ENCODE measurements at regions of chr4 and their contacts with region 1.

Region 1: DNA sequence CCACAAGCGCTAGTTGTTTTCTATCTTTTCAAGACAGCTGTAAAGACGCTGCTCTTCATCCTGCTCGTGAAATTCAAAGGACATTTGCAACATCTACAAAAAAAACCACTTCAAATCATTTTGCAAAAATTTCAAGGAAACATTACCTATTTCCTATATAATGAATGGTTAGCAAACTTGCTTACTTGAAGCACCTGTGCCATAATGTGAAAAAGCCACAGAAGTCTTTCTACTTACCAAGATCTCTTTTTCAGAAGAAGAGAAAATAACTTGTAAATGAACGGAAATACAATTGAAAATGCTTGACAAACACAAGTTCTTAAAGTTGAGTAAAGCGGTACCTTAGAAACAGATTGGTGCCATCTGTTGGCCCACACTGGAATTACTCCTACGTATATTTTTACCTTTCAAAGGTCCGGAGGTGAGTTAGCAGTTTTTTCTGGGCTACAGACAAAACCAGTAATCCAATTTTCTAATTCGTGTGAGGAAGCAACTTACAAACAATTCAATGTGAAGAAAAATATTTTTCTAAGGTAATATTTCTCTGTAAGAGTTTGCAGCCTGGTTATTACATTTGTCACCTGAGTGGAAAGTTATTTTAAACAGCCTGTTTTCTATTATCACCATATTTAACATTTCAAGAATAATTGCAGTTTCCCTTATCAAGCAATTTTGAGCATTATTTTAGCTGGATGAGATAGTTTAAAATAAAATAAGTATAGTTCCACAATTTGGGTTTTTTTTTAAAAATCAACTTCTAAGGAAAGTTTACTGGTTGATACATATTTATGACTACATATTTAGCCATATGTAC is at the start of gene TLR6:
- DNase-seq: peak; percentile 61 to 91 (median 77)
- H3K4me3 ChIP-seq: peak within 1 kb of the TSS; percentile 49 to 93 (median 83)
- H3K4me3 Mint-ChIP-seq: peak within 1 kb of the TSS; percentile 72 to 91
- H3K27ac ChIP-seq: peak within 1 kb of the TSS; percentile 97 to 99
- H3K27ac Mint-ChIP-seq: peak within 1 kb of the TSS; percentile 97 to 100 (median 100)
- H3K4me1 ChIP-seq: peaks cover 39 to 63% of the 10 kb centered on the region in 2 donors
- H3K4me1 Mint-ChIP-seq: peaks cover 48% of the 10 kb centered on the region
- H3K27me3 ChIP-seq: no peaks in the 10 kb centered on the region
- H3K27me3 Mint-ChIP-seq: peaks cover 0 to 5% (median 0%) of the 10 kb centered on the region in 3 donors
- CTCF ChIP-seq: peak; percentile 98
- polyA plus RNA-seq, gene TLR6: 7.7 to 12.7 (median 11.5) TPM

Region 2: GRCh38 chr4:38078590-38079421 is 777.9 kb before region 1 on chr4:
- intact Hi-C with region 1: loop called (anchors 5 to 10 kb)
- DNase-seq: peak; percentile 55 to 87 (median 82)
- H3K4me3 ChIP-seq: peak overlapping the region in 2 of 3 experiments; percentile 17 to 56
- H3K4me3 Mint-ChIP-seq: peak overlapping the region; percentile 60 to 65
- H3K27ac ChIP-seq: peak overlapping the region; percentile 98 to 99
- H3K27ac Mint-ChIP-seq: peak overlapping the region; percentile 94 to 99 (median 98)
- H3K4me1 ChIP-seq: peaks cover 96 to 99% of the 10 kb centered on the region in 2 donors
- H3K4me1 Mint-ChIP-seq: peaks cover 87% of the 10 kb centered on the region
- H3K27me3 ChIP-seq: no peaks in the 10 kb centered on the region
- H3K27me3 Mint-ChIP-seq: peaks cover 0 to 2% (median 0%) of the 10 kb centered on the region in 3 donors
- CTCF ChIP-seq: no peak

Region 3: GRCh38 chr4:38759113-38759789 is 97.5 kb before region 1 on chr4:
- intact Hi-C with region 1: loop called (anchors 2 to 5 kb)
- DNase-seq: peak; percentile 47 to 66 (median 55)
- H3K4me3 ChIP-seq: no peak overlapping the region
- H3K4me3 Mint-ChIP-seq: no peak overlapping the region
- H3K27ac ChIP-seq: no peak overlapping the region
- H3K27ac Mint-ChIP-seq: peak overlapping the region in 1 of 7 donors; percentile 43
- H3K4me1 ChIP-seq: peaks cover 56 to 70% of the 10 kb centered on the region in 2 donors
- H3K4me1 Mint-ChIP-seq: peaks cover 56% of the 10 kb centered on the region
- H3K27me3 ChIP-seq: no peaks in the 10 kb centered on the region
- H3K27me3 Mint-ChIP-seq: no peaks in the 10 kb centered on the region
- CTCF ChIP-seq: peak; percentile 91

Region 4: GRCh38 chr4:38804654-38805295 is 52.0 kb before region 1 on chr4 and contains the start of gene TLR1:
- intact Hi-C with region 1: loop called in 1 of 2 experiments (anchors 5 kb)
- DNase-seq: peak; percentile 66 to 88 (median 70)
- H3K4me3 ChIP-seq: peak within 1 kb of the TSS; percentile 66 to 100 (median 98)
- H3K4me3 Mint-ChIP-seq: peak within 1 kb of the TSS; percentile 83 to 95
- H3K27ac ChIP-seq: peak within 1 kb of the TSS; percentile 73 to 89
- H3K27ac Mint-ChIP-seq: peak within 1 kb of the TSS; percentile 90 to 97 (median 96)
- H3K4me1 ChIP-seq: peaks cover 64 to 71% of the 10 kb centered on the region in 2 donors
- H3K4me1 Mint-ChIP-seq: peaks cover 65% of the 10 kb centered on the region
- H3K27me3 ChIP-seq: no peaks in the 10 kb centered on the region
- H3K27me3 Mint-ChIP-seq: no peaks in the 10 kb centered on the region
- CTCF ChIP-seq: peak; percentile 83
- polyA plus RNA-seq, gene TLR1: 49.8 to 117 (median 62.2) TPM

Region 5: GRCh38 chr4:38822748-38823303 is 33.9 kb before region 1 on chr4:
- intact Hi-C with region 1: no loop called
- DNase-seq: no peak
- H3K4me3 ChIP-seq: no peak overlapping the region
- H3K4me3 Mint-ChIP-seq: no peak overlapping the region
- H3K27ac ChIP-seq: no peak overlapping the region
- H3K27ac Mint-ChIP-seq: peak overlapping the region in 2 of 7 donors; percentile 53 to 74
- H3K4me1 ChIP-seq: peaks cover 9 to 18% of the 10 kb centered on the region in 2 donors
- H3K4me1 Mint-ChIP-seq: peaks cover 26% of the 10 kb centered on the region
- H3K27me3 ChIP-seq: no peaks in the 10 kb centered on the region
- H3K27me3 Mint-ChIP-seq: peaks cover 0 to 2% (median 2%) of the 10 kb centered on the region in 3 donors
- CTCF ChIP-seq: no peak

Region 6: DNA sequence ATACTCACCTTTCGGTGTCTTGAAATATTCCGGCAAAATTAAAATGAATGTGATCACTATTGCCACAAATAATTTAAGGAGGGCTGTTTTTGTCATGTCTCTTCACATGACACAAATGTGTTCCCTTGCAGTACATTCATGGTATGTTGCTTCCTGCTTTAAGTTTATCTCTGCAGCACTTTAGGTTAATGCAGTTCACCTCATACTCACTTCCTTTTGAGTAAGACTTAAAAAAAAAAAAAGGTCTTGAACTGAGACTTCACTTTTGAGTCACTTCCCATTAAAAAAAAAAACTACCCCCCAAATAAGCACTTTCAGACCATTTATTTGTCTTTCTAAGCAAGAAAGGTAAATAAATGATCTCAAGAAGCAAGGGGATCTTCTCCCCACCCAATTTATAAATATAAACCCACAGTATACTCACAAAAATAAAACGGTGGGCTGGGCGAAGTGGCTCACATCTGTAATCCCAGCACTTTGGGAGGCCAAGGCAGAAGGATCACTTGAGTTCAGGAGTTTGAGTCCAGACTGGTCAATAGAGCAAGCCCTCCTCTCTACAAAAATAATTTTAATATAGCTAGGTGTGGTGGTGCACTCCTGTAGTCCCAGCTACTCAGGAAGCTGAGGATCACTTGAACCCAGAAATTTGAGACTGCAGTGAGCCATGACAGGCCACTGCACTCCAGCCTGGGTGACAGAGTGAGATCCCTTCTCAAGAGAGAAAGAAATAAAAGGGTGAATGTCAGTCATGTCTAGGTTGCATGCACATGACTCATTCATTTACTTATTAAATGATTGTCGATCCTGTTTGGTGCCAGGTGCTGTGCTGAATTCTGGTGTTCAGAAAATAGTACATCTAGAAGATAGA is 175.7 kb after region 1 on chr4 and contains the start of gene TMEM156:
- intact Hi-C with region 1: loop called in 1 of 2 experiments (anchors 5 kb)
- DNase-seq: peak; percentile 63 to 80 (median 75)
- H3K4me3 ChIP-seq: peak within 1 kb of the TSS in 1 of 3 experiments; percentile 49
- H3K4me3 Mint-ChIP-seq: peak within 1 kb of the TSS in 1 of 2 donors; percentile 20
- H3K27ac ChIP-seq: peak within 1 kb of the TSS; percentile 66 to 78
- H3K27ac Mint-ChIP-seq: peak within 1 kb of the TSS; percentile 72 to 90 (median 86)
- H3K4me1 ChIP-seq: peaks cover 38 to 49% of the 10 kb centered on the region in 2 donors
- H3K4me1 Mint-ChIP-seq: peaks cover 37% of the 10 kb centered on the region
- H3K27me3 ChIP-seq: no peaks in the 10 kb centered on the region
- H3K27me3 Mint-ChIP-seq: no peaks in the 10 kb centered on the region
- CTCF ChIP-seq: no peak
- polyA plus RNA-seq, gene TMEM156: 0.31 to 1.1 (median 0.43) TPM

Measured in CD14-positive monocyte (primary cell).